Heart left ventricle (tissue), 16 donors: ENCODE measurements at regions of chr18 and their contacts with region 1.

Region 1: GRCh38 chr18:58529714-58530354 is 99.1 kb downstream of the ALPK2 start:
- DNase-seq: peak in 3 of 5 donors; percentile 30 to 60 (median 56)
- ATAC-seq: peak in 3 of 4 donors; percentile 54 to 67 (median 62)
- H3K4me3 ChIP-seq: no peak overlapping the region
- H3K27ac ChIP-seq: no peak overlapping the region
- H3K4me1 ChIP-seq: no peaks in the 10 kb centered on the region
- H3K27me3 ChIP-seq: no peaks in the 10 kb centered on the region
- CTCF ChIP-seq: peak; percentile 59 to 84 (median 73)
- POLR2A ChIP-seq: no peak

Region 2: DNA sequence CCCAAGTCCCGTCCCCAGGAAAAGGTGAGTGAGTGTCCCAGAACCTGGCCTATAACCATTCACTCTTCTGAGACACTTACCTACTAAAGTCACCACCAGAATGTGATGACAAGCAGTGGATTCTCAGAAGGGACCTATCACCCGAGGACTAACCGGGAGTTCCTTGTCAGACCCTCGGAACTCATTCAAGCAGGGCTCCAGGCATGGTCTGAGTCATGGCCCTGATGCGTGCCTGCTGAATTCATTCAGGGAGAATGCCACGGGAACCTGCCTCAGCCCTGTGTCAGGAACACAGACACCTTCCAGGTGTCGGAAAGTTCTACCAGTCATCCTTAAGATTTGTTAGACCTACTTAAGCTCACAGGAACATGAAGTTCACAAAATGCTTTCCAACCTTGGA is 69.3 kb after region 1 on chr18:
- intact Hi-C with region 1: loop called in 2 of 10 experiments (anchors 2 to 5 kb)
- DNase-seq: no peak
- ATAC-seq: peak in 2 of 4 donors; percentile 6 to 12
- H3K4me3 ChIP-seq: no peak overlapping the region
- H3K27ac ChIP-seq: peak overlapping the region in 5 of 12 donors; percentile 10 to 59 (median 29)
- H3K4me1 ChIP-seq: peaks cover 0 to 44% (median 8%) of the 10 kb centered on the region in 12 donors
- H3K27me3 ChIP-seq: no peaks in the 10 kb centered on the region
- CTCF ChIP-seq: no peak
- POLR2A ChIP-seq: no peak

Region 3: GRCh38 chr18:58661423-58661822 is 131.6 kb after region 1 on chr18:
- intact Hi-C with region 1: loop called in 4 of 10 experiments (anchors 2 to 10 kb)
- DNase-seq: no peak
- ATAC-seq: peak in 3 of 4 donors; percentile 59 to 66 (median 66)
- H3K4me3 ChIP-seq: no peak overlapping the region
- H3K27ac ChIP-seq: no peak overlapping the region
- H3K4me1 ChIP-seq: peaks cover 0 to 23% (median 6%) of the 10 kb centered on the region in 12 donors
- H3K27me3 ChIP-seq: no peaks in the 10 kb centered on the region
- CTCF ChIP-seq: peak in 10 of 12 donors; percentile 9 to 49 (median 29)
- POLR2A ChIP-seq: no peak

Region 4: DNA sequence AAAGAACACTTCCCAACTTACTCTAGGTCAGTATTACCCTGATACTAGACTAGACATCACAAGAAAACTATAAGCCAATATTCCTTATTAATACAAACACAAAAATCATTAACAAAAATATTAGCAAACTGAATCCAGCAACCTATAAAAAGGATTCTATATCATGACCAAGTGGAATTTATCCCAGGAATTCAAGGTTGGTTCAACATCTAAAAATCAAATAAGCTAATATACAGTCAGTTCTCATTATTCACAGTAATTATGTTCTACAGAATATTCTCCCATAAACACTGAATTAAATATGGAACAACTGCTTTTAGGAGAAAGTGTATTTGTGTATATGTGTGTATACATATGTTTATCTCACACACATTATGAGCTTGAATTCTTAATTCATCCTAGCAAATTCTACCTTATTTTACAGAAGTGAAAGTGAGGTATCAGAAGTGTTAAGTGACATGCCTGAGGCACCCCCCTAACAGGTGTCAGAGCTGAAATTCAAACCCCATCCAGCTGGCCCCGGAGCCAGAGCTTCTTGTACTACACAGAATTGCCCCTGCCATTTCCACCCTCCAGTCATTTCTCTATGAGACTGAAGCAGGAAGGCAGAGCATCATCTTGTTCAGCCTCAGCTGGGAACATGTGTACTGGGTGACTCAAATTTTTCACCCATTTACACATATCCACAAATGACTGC is 219.2 kb after region 1 on chr18:
- intact Hi-C with region 1: loop called in 1 of 10 experiments (anchors 5 kb)
- DNase-seq: no peak
- ATAC-seq: no peak
- H3K4me3 ChIP-seq: no peak overlapping the region
- H3K27ac ChIP-seq: no peak overlapping the region
- H3K4me1 ChIP-seq: no peaks in the 10 kb centered on the region
- H3K27me3 ChIP-seq: no peaks in the 10 kb centered on the region
- CTCF ChIP-seq: no peak
- POLR2A ChIP-seq: no peak

Region 5: DNA sequence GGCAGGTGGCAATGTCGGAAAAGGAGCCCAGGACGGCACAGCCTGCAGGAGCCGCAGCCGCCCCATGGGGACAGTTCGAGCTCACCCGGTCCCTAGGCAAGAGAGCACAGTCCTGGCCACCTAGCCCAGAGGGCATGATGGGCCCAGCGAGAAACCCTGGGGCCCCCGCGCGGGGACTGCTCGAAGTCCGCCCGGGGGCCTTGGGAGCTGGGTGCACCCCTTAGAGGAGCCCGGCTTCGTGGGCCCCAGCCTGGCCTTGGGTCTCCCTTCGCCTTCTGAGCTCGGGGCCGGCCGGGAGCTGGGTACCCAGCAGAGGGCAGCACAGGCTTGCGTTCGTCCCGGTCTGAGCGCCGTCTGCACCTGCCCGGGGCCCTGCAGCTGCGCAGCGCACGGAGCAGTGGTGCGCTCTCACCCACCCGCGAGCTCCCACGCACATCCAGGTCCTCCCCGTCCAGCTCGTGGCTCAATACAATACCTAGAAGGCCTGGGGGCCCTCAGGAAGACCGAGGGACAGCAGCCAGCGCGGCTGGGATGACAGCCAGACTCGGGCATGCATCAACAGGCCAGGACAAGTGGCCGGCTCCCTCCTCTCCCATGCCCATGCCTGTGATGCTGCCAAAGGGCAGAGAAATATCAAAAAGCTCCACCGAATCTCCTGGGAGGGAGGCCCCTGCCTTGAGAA is 238.6 kb after region 1 on chr18:
- intact Hi-C with region 1: loop called in 9 of 10 experiments (anchors 1 to 2 kb)
- DNase-seq: peak; percentile 69 to 89 (median 75)
- ATAC-seq: peak; percentile 65 to 95 (median 92)
- H3K4me3 ChIP-seq: peak overlapping the region in 9 of 12 donors; percentile 15 to 53 (median 35)
- H3K27ac ChIP-seq: peak overlapping the region in 3 of 12 donors; percentile 10 to 40 (median 37)
- H3K4me1 ChIP-seq: peaks cover 0 to 18% (median 10%) of the 10 kb centered on the region in 12 donors
- H3K27me3 ChIP-seq: peaks cover 0 to 4% (median 0%) of the 10 kb centered on the region in 9 donors
- CTCF ChIP-seq: peak; percentile 72 to 91 (median 81)
- POLR2A ChIP-seq: no peak